GM18951 (cell line): ENCODE measurements at regions of chr7 and their contacts with region 1.

Region 1: GRCh38 chr7:43834463-43835251 is 34.7 kb downstream of the MRPS24 start:
- POLR2A ChIP-seq: no peak

Region 2: DNA sequence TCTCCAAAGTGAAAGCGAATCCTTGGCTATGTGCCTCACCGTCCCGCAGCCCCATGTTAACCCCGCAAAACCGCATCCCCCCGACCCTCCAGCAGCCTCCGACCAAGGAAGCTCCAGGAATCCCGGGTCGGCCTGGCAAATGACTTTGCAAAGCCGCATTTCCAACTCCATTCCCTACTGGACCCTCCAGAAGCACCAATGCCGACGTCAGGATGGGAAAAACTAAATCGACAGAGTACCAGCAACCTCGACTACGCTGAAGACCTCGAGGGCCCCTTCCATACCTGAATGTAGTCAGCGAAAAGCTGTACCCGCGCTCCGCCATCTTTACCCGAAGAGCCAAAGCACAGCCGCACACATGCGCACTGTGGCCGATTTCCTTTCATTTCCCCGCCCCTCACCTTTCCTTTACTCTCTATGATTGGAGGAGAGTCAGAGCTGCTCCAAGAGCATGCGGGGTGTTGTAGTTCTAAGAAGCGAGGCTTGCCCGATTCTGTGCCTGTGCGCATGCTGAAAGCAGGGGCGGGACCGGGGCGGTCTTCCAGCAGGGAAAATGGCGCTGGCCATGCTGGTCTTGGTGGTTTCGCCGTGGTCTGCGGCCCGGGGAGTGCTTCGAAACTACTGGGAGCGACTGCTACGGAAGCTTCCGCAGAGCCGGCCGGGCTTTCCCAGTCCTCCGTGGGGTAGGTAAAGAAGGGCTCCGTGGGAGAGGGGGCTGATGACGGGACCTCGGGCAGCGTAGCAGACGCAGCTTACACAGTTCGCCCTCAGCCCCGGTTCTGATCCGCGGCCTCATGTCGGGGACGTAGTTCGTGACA is 902.6 kb before region 1 on chr7 and contains the starts of genes MRPL32 and PSMA2:
- in situ Hi-C with region 1: loop called (anchors 25 kb)
- POLR2A ChIP-seq: peak; percentile 91

Region 3: DNA sequence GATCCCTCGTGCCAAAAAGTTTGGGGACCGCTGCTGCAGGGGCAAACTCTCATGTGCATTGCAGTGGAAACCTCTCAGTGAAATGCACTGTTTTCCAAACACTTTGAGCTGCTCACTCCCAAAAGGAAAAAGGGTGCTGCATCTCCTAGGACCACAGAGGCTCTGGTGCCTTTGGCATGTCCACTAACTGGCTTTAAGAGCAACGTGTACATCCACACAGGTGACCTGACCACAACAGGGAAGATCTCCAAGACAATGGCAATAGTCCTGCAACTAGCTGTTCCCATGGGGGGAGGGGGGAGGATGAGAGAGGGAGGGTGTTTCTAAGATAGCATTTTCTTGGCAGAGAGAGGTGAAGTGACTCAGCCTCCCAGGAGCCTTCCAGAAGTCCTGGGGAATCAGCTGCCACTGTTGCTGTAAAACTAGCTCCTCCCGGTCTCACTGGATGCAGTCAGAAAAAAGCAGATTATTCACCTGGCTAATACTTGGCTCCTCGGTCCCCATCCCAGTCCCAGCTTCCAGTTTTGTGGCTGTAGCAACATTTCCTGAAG is 540.5 kb before region 1 on chr7:
- in situ Hi-C with region 1: loop called (anchors 25 kb)
- POLR2A ChIP-seq: no peak

Region 4: GRCh38 chr7:43582503-43583423 is 251.9 kb before region 1 on chr7 and contains the start of gene STK17A:
- in situ Hi-C with region 1: loop called (anchors 10 kb)
- POLR2A ChIP-seq: peak; percentile 98

Region 5: GRCh38 chr7:43658718-43659548 is 175.7 kb before region 1 on chr7:
- in situ Hi-C with region 1: no loop called
- POLR2A ChIP-seq: no peak

Region 6: DNA sequence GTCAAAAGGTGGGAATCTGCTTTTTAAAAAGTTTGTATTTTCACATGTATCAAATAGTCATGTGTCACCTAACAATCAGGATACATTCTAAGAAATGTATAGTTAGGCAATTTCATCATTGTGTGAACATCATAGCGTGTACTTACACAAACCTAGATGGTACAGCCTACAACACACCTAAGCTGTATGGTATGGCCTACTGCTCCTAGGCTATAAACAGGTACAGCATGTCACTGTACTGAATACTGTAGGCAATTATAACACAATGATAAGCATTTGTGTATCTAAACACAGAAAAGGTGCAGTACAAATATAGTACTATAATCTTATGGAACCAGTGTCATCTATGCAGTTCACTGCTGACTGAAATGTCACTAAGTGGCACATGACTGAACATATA is 123.2 kb before region 1 on chr7:
- in situ Hi-C with region 1: loop called (anchors 10 kb)
- POLR2A ChIP-seq: no peak